Mucosa of descending colon (tissue), 3 donors: ENCODE measurements at regions of chr10 and their contacts with region 1.

Region 1: DNA sequence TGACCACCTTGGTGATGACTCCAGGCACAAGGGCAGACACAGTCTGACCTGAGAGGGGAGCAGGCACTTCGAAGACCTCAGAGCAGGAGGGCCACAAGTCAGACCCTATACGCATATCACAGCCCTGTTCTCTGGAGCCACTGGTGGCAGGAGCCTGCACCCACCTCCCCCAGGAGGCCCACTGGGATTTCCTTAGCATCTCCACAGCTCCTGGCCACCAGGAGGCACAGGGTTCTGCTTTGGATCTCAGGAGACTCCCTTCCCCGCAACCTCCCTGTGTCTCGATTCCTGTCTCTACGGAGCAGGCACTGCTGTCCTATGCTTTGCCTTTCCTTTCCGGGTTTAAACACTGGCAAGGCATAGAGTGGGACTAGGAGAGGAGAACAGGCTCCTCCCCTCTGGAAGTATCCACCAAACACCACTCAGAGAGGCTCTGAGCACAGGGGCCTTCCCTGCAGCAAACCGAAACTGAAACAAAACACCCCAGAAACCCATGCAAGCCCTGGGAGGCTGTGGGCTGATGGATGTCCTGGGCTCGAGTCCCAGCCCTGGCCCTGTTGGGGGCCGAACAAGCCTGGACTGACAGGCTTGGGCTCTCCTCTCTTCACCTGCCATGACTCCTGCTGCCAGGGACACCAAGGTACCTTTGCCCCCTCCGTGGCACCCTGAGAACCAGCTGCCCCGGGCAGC is 166.3 kb downstream of the NEURL1 start:
- DNase-seq: peak in 2 of 3 donors; percentile 56 to 67
- ATAC-seq: peak; percentile 67
- H3K4me3 ChIP-seq: no peak overlapping the region
- H3K4me1 ChIP-seq: peaks cover 7% of the 10 kb centered on the region
- CTCF ChIP-seq: no peak

Region 2: GRCh38 chr10:103618575-103619423 is 41.0 kb before region 1 on chr10:
- intact Hi-C with region 1: loop called in 1 of 2 experiments (anchors 10 kb)
- DNase-seq: peak; percentile 46 to 58 (median 51)
- ATAC-seq: peak; percentile 20
- H3K4me3 ChIP-seq: no peak overlapping the region
- H3K4me1 ChIP-seq: peaks cover 2% of the 10 kb centered on the region
- CTCF ChIP-seq: no peak